Mammary epithelial cell (primary cell): ENCODE measurements at regions of chr16 and their contacts with region 1.

Region 1: GRCh38 chr16:51960931-51961330 is 586.0 kb downstream of the TOX3 start:
- DNase-seq: no peak
- H3K4me3 ChIP-seq: no peak overlapping the region
- H3K27ac ChIP-seq: no peak overlapping the region
- H3K4me1 ChIP-seq: no peaks in the 10 kb centered on the region
- H3K27me3 ChIP-seq: no peaks in the 10 kb centered on the region
- CTCF ChIP-seq: no peak

Region 2: DNA sequence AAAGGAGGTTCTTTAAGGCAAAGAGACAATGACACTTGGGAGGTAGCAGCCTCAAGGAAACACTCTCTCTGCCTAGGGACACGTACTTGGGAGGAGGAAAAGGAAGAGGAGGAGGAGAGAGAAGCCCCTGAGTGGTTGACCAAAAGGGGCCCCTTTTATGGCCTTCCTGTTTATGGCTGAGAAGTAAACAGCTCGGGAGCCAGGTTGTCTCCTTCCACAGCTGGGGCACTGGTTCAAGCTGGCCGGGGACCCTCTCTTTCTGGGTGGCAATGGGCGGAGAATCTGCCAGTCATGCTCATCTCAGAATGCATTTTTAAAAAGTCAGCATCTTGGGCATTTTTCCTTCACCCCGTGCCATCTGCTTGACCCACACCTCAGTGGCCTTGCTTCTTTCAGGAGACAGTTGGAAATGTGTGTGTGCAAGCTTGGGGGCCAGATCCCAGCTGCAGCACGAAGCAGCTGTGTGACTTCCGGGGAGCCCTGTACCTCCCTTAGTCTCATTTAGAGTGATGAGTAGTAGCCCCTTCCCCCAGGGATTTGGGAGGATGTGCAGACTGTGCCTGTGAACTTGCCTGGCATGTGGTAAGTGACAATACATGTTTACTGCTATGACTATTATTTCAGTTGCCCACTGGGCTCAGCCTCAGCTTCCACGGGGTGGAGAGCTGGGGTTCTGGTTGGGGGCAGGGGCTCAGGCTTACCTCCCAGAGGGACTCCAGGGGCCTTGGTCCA is 776.1 kb before region 1 on chr16:
- CTCF ChIA-PET with region 1: no interaction called
- dilution Hi-C with region 1: no loop called
- in situ Hi-C with region 1: no loop called
- intact Hi-C with region 1: loop called (anchors 5 kb)
- DNase-seq: no peak
- H3K4me3 ChIP-seq: no peak overlapping the region
- H3K27ac ChIP-seq: no peak overlapping the region
- H3K4me1 ChIP-seq: no peaks in the 10 kb centered on the region
- H3K27me3 ChIP-seq: peaks cover 3% of the 10 kb centered on the region
- CTCF ChIP-seq: no peak

Region 3: DNA sequence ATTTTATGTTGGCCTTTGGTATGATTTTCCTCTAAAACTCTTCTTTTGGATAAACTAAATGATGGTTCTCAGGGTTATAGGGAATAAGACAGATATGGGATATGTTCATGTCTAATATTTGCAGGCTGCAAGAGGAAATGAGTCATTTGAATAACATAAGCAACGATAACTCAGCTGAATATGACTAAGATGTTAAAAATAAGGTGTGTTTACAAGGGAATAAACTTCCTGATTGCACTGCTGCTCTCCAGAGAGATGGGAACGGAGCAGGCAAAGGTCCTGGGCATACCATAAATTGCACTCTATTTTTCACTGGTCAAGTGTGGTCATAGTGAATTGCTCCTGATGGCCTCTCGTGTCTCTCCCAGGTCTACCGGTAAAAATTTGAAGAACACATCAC is 80.2 kb before region 1 on chr16:
- CTCF ChIA-PET with region 1: no interaction called
- dilution Hi-C with region 1: no loop called
- in situ Hi-C with region 1: no loop called
- intact Hi-C with region 1: no loop called
- DNase-seq: peak; percentile 72
- H3K4me3 ChIP-seq: no peak overlapping the region
- H3K27ac ChIP-seq: peak overlapping the region; percentile 46
- H3K4me1 ChIP-seq: peaks cover 21% of the 10 kb centered on the region
- H3K27me3 ChIP-seq: no peaks in the 10 kb centered on the region
- CTCF ChIP-seq: no peak

Region 4: GRCh38 chr16:51971184-51971583 is 10.3 kb after region 1 on chr16:
- CTCF ChIA-PET with region 1: no interaction called
- dilution Hi-C with region 1: no loop called
- in situ Hi-C with region 1: no loop called
- intact Hi-C with region 1: no loop called
- DNase-seq: peak; percentile 23
- H3K4me3 ChIP-seq: no peak overlapping the region
- H3K27ac ChIP-seq: no peak overlapping the region
- H3K4me1 ChIP-seq: no peaks in the 10 kb centered on the region
- H3K27me3 ChIP-seq: peaks cover 3% of the 10 kb centered on the region
- CTCF ChIP-seq: peak; percentile 61 to 81